CD8-positive, alpha-beta T cell (primary cell): ENCODE measurements at regions of chr11 and their contacts with region 1.

Region 1: DNA sequence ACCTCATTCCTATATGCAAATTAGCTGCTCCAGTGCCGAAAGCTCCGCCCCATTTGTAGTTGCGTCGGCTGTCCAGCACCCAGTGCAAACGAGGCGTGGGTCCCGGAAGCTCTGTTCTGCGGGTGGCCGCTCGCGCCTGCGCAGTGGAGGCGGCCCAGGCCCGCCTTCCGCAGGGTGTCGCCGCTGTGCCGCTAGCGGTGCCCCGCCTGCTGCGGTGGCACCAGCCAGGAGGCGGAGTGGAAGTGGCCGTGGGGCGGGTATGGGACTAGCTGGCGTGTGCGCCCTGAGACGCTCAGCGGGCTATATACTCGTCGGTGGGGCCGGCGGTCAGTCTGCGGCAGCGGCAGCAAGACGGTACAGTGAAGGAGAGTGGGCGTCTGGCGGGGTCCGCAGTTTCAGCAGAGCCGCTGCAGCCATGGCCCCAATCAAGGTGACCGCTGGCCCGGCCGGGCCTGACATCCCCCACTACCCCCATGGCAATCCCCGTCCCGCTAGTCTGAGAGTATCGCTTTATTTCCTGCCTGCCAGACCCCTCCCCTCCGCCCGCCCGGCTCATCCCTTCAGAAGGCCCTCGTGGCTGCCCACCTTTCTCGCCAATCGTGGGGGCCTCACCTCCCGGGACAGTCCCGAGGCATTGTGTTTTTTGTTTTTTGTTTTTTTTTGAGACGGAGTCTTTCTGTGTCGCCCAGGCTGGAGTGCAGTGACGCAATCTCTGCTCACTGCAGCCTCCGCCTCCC is at the start of gene PRDX5:
- DNase-seq: peak; percentile 90 to 99 (median 93)
- ATAC-seq: peak; percentile 75
- H3K4me3 ChIP-seq: peak within 1 kb of the TSS; percentile 66 to 69
- H3K4me3 Mint-ChIP-seq: peak within 1 kb of the TSS; percentile 89
- H3K27ac ChIP-seq: peak within 1 kb of the TSS; percentile 97 to 100
- H3K27ac Mint-ChIP-seq: peak within 1 kb of the TSS; percentile 99
- H3K4me1 ChIP-seq: peaks cover 8% of the 10 kb centered on the region
- H3K4me1 Mint-ChIP-seq: peaks cover 32% of the 10 kb centered on the region
- H3K27me3 ChIP-seq: no peaks in the 10 kb centered on the region
- H3K27me3 Mint-ChIP-seq: no peaks in the 10 kb centered on the region
- CTCF ChIP-seq: no peak
- total RNA-seq, gene PRDX5: 39.9 to 41.0 TPM

Region 2: GRCh38 chr11:64225612-64226506 is 92.3 kb before region 1 on chr11 and contains the starts of genes NUDT22 and TRPT1:
- CTCF ChIA-PET with region 1: no interaction called
- POLR2A ChIA-PET with region 1: interaction called, 6 read pairs
- intact Hi-C with region 1: loop called in 1 of 2 experiments (anchors 1 kb)
- DNase-seq: peak; percentile 75 to 96 (median 93)
- ATAC-seq: peak; percentile 65
- H3K4me3 ChIP-seq: peak within 1 kb of the TSS; percentile 76 to 100
- H3K4me3 Mint-ChIP-seq: peak within 1 kb of the TSS; percentile 93
- H3K27ac ChIP-seq: peak within 1 kb of the TSS; percentile 85 to 88
- H3K27ac Mint-ChIP-seq: peak within 1 kb of the TSS; percentile 91
- H3K4me1 ChIP-seq: peaks cover 41% of the 10 kb centered on the region
- H3K4me1 Mint-ChIP-seq: peaks cover 30% of the 10 kb centered on the region
- H3K27me3 ChIP-seq: no peaks in the 10 kb centered on the region
- H3K27me3 Mint-ChIP-seq: no peaks in the 10 kb centered on the region
- CTCF ChIP-seq: peak; percentile 58
- total RNA-seq, gene NUDT22: 20.1 to 23.6 TPM
- total RNA-seq, gene TRPT1: 12.3 to 14.3 TPM

Region 3: GRCh38 chr11:64284048-64284961 is 33.8 kb before region 1 on chr11 and contains the start of gene BAD:
- CTCF ChIA-PET with region 1: interaction called, 6 read pairs
- POLR2A ChIA-PET with region 1: interaction called, 8 read pairs
- intact Hi-C with region 1: loop called (anchors 1 kb)
- DNase-seq: peak; percentile 85 to 95 (median 92)
- ATAC-seq: peak; percentile 77
- H3K4me3 ChIP-seq: peak within 1 kb of the TSS; percentile 73 to 77
- H3K4me3 Mint-ChIP-seq: peak within 1 kb of the TSS; percentile 88
- H3K27ac ChIP-seq: peak within 1 kb of the TSS; percentile 95 to 100
- H3K27ac Mint-ChIP-seq: peak within 1 kb of the TSS; percentile 97
- H3K4me1 ChIP-seq: peaks cover 18% of the 10 kb centered on the region
- H3K4me1 Mint-ChIP-seq: peaks cover 16% of the 10 kb centered on the region
- H3K27me3 ChIP-seq: no peaks in the 10 kb centered on the region
- H3K27me3 Mint-ChIP-seq: no peaks in the 10 kb centered on the region
- CTCF ChIP-seq: no peak
- total RNA-seq, gene BAD: 14.6 to 18.2 TPM

Region 4: GRCh38 chr11:64358907-64359711 is 41.0 kb after region 1 on chr11 and contains the start of gene RPS6KA4:
- CTCF ChIA-PET with region 1: interaction called, 9 read pairs
- POLR2A ChIA-PET with region 1: interaction called, 11 read pairs
- intact Hi-C with region 1: loop called (anchors 1 kb)
- DNase-seq: peak in 7 of 9 experiments; percentile 17 to 76 (median 47)
- ATAC-seq: peak; percentile 77
- H3K4me3 ChIP-seq: peak within 1 kb of the TSS; percentile 76 to 87
- H3K4me3 Mint-ChIP-seq: peak within 1 kb of the TSS; percentile 88
- H3K27ac ChIP-seq: peak within 1 kb of the TSS; percentile 40 to 66
- H3K27ac Mint-ChIP-seq: peak within 1 kb of the TSS; percentile 70
- H3K4me1 ChIP-seq: peaks cover 30% of the 10 kb centered on the region
- H3K4me1 Mint-ChIP-seq: peaks cover 29% of the 10 kb centered on the region
- H3K27me3 ChIP-seq: no peaks in the 10 kb centered on the region
- H3K27me3 Mint-ChIP-seq: no peaks in the 10 kb centered on the region
- CTCF ChIP-seq: no peak
- total RNA-seq, gene RPS6KA4: 8.6 to 10.1 TPM

Region 5: DNA sequence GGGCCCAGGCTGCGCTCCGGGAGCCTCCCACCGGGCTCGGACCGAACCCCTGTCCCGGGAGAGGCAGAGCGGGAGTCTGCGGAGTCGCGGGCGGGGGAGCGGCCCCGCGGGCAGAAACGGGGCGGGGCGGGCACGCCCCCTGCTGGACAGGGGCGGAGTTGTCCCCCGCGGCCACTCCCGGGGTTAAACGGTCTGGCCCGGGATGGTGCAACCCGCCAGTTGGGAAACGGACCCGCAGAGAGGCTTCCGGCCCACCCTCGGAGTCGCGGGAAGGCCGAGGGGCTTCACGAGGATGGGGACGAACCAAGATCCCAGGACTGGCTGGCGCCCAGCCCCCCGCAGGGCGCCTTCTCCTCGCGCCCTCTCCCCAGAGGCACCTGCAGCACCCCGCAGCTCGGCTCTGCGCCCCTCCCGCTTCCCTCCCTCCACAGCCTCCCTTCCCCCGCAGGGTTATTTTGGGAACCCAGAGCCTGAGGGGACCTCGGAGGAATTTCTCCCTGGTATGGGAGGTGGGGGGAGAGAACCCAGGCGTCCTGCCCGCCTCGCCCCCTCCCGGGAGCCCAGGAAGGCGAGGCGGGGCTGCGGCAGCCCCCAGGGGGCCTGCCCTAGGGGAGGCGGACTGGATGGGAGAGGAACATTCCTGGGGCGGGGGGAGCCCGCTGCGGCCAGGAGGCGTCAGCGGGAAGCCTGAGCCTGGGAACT is 424.9 kb after region 1 on chr11:
- CTCF ChIA-PET with region 1: interaction called, 4 read pairs
- POLR2A ChIA-PET with region 1: interaction called, 3 read pairs
- intact Hi-C with region 1: loop called in 1 of 2 experiments (anchors 5 kb)
- DNase-seq: peak; percentile 56 to 91 (median 77)
- ATAC-seq: peak; percentile 13
- H3K4me3 ChIP-seq: peak overlapping the region; percentile 78 to 89
- H3K4me3 Mint-ChIP-seq: peak overlapping the region; percentile 99
- H3K27ac ChIP-seq: peak overlapping the region; percentile 78 to 88
- H3K27ac Mint-ChIP-seq: no peak overlapping the region
- H3K4me1 ChIP-seq: peaks cover 31% of the 10 kb centered on the region
- H3K4me1 Mint-ChIP-seq: peaks cover 48% of the 10 kb centered on the region
- H3K27me3 ChIP-seq: no peaks in the 10 kb centered on the region
- H3K27me3 Mint-ChIP-seq: no peaks in the 10 kb centered on the region
- CTCF ChIP-seq: peak; percentile 90